PC-9 (cell line): ENCODE measurements at regions of chr13 and their contacts with region 1.

Region 1: DNA sequence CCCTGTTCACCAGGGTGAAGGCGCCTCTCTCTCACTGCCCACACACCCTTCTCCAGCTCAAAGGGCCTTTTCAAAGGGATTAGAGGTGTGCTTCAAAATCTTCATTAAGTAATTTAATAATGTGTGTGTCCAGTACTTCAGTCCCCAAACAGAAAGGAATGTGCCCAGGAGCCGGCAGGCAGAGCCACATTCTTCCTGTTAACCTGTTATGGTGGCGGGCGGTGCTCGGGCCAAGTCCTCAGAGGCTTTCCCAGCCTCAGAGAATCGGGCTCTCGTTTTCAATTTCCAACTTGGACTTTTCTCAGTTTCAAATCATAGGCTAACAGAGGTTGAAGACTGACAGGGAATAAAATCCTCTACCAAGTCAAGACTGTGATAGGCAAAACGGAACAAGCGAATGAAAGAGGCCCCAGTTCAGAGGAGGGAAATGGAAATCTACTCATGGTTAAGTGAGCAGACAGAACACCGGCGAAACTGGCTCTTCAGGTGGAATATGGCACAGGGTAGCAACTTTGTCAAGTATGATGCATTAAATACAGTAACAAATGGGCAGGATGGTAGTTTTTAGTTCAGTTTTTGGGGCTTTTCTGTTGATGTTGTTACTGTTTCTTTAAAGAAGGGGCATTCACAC is 68.6 kb downstream of the FOXO1 start:
- DNase-seq: peak; percentile 51 to 57
- H3K4me3 ChIP-seq: no peak overlapping the region
- H3K27ac ChIP-seq: peak overlapping the region; percentile 59
- H3K4me1 ChIP-seq: no peaks in the 10 kb centered on the region
- H3K27me3 ChIP-seq: no peaks in the 10 kb centered on the region
- CTCF ChIP-seq: no peak

Region 2: DNA sequence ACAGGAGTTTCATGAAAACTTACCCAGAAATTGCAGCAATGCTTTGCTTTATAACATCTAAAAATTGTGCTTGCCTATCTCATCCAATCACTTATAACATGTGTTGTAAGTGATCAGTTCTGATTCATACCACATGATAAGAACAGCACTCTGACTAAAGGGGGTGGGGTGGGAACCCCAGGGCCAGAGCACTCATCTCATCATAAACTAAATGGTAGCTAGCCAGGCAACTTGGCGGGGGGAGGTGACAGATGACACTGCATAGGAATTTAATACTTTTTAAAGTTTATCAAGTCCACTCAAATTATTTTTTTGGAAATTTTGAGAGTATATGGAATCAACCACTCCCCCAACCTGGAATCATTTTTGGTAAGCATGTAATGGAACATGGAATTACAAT is 26.5 kb after region 1 on chr13:
- CTCF ChIA-PET with region 1: interaction called, 11 read pairs
- POLR2A ChIA-PET with region 1: no interaction called
- intact Hi-C with region 1: no loop called
- DNase-seq: no peak
- H3K4me3 ChIP-seq: no peak overlapping the region
- H3K27ac ChIP-seq: no peak overlapping the region
- H3K4me1 ChIP-seq: peaks cover 19% of the 10 kb centered on the region
- H3K27me3 ChIP-seq: no peaks in the 10 kb centered on the region
- CTCF ChIP-seq: no peak